ENCODE measurements at regions of chr6 and their contacts with region 1.

Region 1: DNA sequence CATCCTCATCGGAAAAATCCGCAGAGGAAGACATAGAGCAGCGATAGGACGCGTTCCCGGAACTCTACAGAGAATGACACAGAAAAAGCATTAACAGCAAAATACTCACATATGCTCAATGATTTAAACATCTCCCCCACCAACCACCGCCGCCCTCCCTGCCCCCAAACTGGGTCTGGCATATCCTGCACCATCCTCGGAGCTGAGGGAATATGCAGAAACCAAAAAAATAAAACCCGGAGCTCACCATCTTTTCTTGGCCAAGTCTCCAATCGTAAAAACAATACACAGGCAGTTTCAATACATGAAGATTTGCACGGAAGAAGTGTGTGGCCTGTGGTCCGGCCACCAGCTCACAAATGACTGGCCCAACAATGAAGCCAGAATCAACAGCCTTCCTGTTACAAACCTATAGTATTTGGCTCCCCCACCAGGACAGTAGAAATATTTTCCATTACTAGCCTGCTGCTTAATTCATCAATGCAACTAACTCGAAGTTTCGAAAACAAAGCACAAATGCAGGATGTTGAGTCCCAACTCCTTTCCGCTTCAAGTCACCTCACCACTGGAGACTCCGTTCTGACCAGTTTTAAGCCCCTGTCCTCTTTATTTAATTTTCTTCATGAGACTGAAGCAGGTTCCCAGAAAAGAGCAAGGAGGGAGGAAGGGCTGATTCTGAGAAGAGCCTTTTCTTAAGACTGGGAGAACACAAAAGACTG is 103.2 kb upstream of the BEND6 start:
- DNase-seq: peak in 1 of 2 donors; percentile 42
- H3K4me3 ChIP-seq: peak overlapping the region; percentile 55 to 72
- H3K27ac ChIP-seq: peak overlapping the region; percentile 47 to 64
- H3K4me1 ChIP-seq: peaks cover 0 to 20% (median 5%) of the 10 kb centered on the region in 4 donors
- H3K27me3 ChIP-seq: no peaks in the 10 kb centered on the region
- CTCF ChIP-seq: peak; percentile 61 to 64

Region 2: DNA sequence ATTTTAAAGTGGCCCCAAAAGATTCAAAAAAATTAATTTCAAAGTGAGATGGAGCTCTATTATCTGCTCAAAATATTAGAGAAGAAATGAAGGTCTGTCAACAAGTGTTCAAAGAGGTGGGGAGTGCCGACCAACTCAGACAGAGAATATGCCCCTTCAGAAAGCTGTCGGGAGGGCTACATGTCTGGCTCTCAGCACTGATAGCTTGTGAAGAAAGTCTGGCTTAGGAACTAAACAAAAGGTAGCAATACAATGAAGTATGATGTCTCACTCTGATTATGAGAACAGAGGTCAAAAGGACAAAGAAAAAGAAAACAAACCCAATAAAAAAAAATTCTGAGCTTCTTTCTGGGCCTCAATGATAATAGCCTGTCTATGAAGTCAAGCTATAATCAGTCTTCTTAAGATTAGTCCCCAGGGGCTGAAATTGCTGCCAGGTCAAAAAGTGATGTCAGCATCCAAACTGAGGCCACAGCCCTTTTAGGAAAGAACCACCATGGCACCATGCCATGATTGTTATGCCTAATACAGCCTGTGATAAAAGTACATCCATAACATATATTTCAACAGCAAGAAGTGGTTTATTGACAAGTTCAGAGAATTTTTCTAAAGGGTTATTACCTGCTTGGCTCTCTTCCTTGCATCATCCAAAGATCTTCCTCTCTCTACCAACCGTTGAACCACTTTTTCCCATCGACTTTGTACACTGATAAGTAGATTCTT is 359.9 kb before region 1 on chr6:
- intact Hi-C with region 1: no loop called
- DNase-seq: peak in 1 of 2 donors; percentile 31
- H3K4me3 ChIP-seq: no peak overlapping the region
- H3K27ac ChIP-seq: peak overlapping the region; percentile 7 to 31
- H3K4me1 ChIP-seq: peaks cover 0 to 34% (median 3%) of the 10 kb centered on the region in 4 donors
- H3K27me3 ChIP-seq: no peaks in the 10 kb centered on the region
- CTCF ChIP-seq: no peak

Region 3: DNA sequence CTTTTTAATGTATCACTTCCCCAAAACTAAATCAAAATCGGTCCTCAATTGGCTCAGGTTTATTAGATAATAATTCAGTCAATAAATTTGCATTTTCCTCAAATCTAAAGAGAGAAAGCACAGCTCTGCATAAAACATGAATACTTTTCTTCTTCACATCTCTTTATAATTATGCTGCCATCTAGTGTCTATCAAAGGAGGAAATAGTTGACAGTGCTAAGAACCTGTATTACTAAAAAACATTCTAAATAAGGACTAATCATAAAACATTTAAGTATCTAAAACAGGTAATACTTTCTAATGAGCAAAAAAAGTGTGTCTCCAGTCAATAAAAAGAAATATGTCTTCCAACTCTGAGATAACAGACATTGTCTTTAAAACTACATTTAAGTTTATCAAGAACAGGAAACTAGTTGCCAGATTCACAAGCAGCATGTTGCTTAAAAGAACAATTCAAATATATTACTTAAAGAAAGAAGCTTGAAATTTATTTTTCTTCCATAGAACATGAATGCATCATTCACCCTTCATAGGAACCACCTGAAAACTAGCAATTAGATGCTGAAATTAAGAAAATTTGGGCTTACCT is 152.5 kb before region 1 on chr6:
- intact Hi-C with region 1: loop called (anchors 5 kb)
- DNase-seq: no peak
- H3K4me3 ChIP-seq: no peak overlapping the region
- H3K27ac ChIP-seq: no peak overlapping the region
- H3K4me1 ChIP-seq: peaks cover 0 to 17% (median 5%) of the 10 kb centered on the region in 4 donors
- H3K27me3 ChIP-seq: no peaks in the 10 kb centered on the region
- CTCF ChIP-seq: peak; percentile 52 to 64

Measured in tibial artery (tissue), 4 donors.